Gastrocnemius medialis (tissue), 4 donors: ENCODE measurements at regions of chr6 and their contacts with region 1.

Region 1: DNA sequence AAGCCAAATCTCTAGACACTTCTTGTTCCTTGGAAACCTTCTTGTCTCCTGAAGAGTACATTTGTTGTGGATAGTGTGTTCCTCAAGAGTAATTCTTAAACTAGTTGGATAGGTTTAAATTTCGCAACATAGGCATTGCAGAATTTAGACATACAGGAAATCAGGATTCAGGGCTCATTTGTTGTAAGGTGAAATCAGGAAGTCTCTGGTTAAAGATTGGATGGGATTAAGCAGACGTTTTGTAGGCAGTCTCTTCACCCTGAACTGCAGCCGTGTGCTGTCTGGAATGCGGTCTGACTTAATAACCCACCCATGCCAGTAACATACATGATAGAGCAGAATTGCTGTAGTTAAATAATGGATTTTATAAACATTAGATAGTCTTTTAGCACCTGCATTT is 21.7 kb downstream of the HIVEP1 start:
- DNase-seq: no peak
- ATAC-seq: no peak
- H3K4me3 ChIP-seq: no peak overlapping the region
- H3K27ac ChIP-seq: no peak overlapping the region
- H3K4me1 ChIP-seq: peaks cover 11 to 21% of the 10 kb centered on the region in 2 donors
- H3K27me3 ChIP-seq: no peaks in the 10 kb centered on the region
- CTCF ChIP-seq: no peak
- POLR2A ChIP-seq: no peak

Region 2: DNA sequence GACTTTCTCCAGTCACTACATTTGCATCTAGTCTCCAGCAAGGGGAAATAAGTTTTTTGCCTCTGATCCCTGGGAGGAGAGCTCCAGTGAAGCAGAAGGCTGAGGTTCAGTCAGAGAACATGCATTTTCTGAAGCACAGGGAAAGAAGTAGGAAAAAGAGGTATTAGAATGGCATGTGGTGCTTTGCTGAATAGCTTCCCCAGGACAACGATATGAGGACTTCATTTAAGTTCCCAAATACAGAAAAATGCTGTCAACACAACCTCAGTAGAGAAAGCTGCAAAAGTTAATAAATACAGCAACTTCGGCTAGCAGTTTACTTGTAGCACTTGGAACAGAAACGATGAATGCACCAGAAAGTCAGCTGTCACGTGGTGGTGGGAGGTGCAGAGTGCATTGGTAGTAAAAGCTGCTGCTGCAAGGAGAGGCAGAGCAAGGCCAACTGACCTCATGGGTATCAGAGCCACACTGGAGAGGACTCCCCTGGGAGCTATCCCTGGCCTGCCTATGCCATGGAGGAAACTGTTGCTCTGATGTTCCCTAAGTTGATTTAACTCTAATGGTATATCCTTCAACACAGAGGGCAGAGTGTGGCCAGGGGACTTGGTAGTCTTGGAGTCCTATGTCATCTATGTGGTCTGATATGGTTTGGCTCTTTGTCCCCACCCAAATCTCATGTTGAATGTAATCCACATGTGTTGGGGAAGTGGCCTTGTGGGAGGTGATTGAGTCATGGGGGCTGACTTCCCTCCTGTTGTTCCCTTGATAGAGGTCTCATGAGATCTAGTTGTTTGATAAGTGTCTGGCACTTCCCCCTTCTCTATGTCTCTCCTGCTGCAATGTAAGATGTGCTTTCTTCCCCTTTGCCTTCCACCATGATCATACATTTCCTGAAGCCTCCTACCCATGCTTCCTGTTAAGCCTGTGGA is 341.1 kb before region 1 on chr6:
- in situ Hi-C with region 1: no loop called
- intact Hi-C with region 1: loop called (anchors 10 kb)
- DNase-seq: no peak
- ATAC-seq: no peak
- H3K4me3 ChIP-seq: no peak overlapping the region
- H3K27ac ChIP-seq: no peak overlapping the region
- H3K4me1 ChIP-seq: no peaks in the 10 kb centered on the region
- H3K27me3 ChIP-seq: no peaks in the 10 kb centered on the region
- CTCF ChIP-seq: no peak
- POLR2A ChIP-seq: no peak